ENCODE measurements at regions of chr10 and their contacts with region 1.

Region 1: GRCh38 chr10:47047671-47048525 is 136.7 kb downstream of the PTPN20 start:
- DNase-seq: peak; percentile 59
- H3K4me3 ChIP-seq: no peak overlapping the region
- H3K27ac ChIP-seq: no peak overlapping the region
- H3K27me3 ChIP-seq: no peaks in the 10 kb centered on the region
- CTCF ChIP-seq: peak; percentile 90

Region 2: GRCh38 chr10:46999217-46999616 is 48.7 kb before region 1 on chr10:
- CTCF ChIA-PET with region 1: no interaction called
- POLR2A ChIA-PET with region 1: no interaction called
- DNase-seq: no peak
- H3K4me3 ChIP-seq: no peak overlapping the region
- H3K27ac ChIP-seq: no peak overlapping the region
- H3K27me3 ChIP-seq: peaks cover 2% of the 10 kb centered on the region
- CTCF ChIP-seq: no peak

Region 3: GRCh38 chr10:47024399-47025252 is 23.3 kb before region 1 on chr10:
- CTCF ChIA-PET with region 1: interaction called, 35 read pairs
- POLR2A ChIA-PET with region 1: no interaction called
- DNase-seq: peak; percentile 6
- H3K4me3 ChIP-seq: no peak overlapping the region
- H3K27ac ChIP-seq: no peak overlapping the region
- H3K27me3 ChIP-seq: no peaks in the 10 kb centered on the region
- CTCF ChIP-seq: peak; percentile 90

Region 4: GRCh38 chr10:47058961-47059391 is 11.1 kb after region 1 on chr10:
- CTCF ChIA-PET with region 1: interaction called, 13 read pairs
- POLR2A ChIA-PET with region 1: no interaction called
- DNase-seq: no peak
- H3K4me3 ChIP-seq: no peak overlapping the region
- H3K27ac ChIP-seq: no peak overlapping the region
- H3K27me3 ChIP-seq: peaks cover 8% of the 10 kb centered on the region
- CTCF ChIP-seq: no peak

Region 5: GRCh38 chr10:47300429-47300931 is 252.6 kb after region 1 on chr10:
- CTCF ChIA-PET with region 1: interaction called, 10 read pairs
- POLR2A ChIA-PET with region 1: no interaction called
- DNase-seq: no peak
- H3K4me3 ChIP-seq: peak overlapping the region; percentile 34; the same call in 1 of the 2 replicates
- H3K27ac ChIP-seq: no peak overlapping the region
- H3K27me3 ChIP-seq: peaks cover 66% of the 10 kb centered on the region
- CTCF ChIP-seq: no peak

Region 6: GRCh38 chr10:47340608-47341170 is 292.8 kb after region 1 on chr10:
- CTCF ChIA-PET with region 1: interaction called, 15 read pairs
- POLR2A ChIA-PET with region 1: no interaction called
- DNase-seq: peak; percentile 15
- H3K4me3 ChIP-seq: no peak overlapping the region
- H3K27ac ChIP-seq: no peak overlapping the region
- H3K27me3 ChIP-seq: peaks cover 9% of the 10 kb centered on the region
- CTCF ChIP-seq: peak; percentile 96